Activated T-helper 1 cell treated with anti-CD3 and anti-CD28 coated beads, Interleukin-12 subunit alpha, Interleukin-12 subunit beta, Interleukin-2, Interleukin-4 antibody, amounts not matched to agents 30 ng/mL and 10 ng/mL and 1 ng/mL, durations not matched to agents 14 hours and 24 hours and 36 hours (primary cell): ENCODE measurements at regions of chr16 and their contacts with region 1.

Region 1: DNA sequence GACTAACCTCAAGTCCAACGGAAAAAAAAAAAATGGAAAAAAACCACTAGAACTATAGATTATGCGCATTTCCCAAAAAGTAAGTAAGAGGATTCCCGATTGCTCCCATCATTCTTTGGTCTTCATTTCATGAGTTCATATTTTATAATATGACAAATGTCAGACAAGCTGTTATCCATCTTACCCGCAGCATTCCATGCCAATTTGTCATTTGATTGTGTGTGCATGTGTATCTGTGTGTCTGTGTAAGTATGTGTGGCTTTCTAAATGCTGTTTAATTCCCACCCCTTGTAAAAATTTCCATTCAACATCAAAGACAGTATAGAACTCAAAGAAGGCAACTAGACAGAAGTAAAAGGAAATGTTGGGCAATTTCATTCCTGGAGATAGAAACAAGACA is 434.1 kb downstream of the CDH11 start:
- DNase-seq: no peak
- H3K4me3 Mint-ChIP-seq: no peak overlapping the region
- H3K27ac Mint-ChIP-seq: no peak overlapping the region
- H3K4me1 Mint-ChIP-seq: no peaks in the 10 kb centered on the region
- H3K27me3 Mint-ChIP-seq: no peaks in the 10 kb centered on the region

Region 2: DNA sequence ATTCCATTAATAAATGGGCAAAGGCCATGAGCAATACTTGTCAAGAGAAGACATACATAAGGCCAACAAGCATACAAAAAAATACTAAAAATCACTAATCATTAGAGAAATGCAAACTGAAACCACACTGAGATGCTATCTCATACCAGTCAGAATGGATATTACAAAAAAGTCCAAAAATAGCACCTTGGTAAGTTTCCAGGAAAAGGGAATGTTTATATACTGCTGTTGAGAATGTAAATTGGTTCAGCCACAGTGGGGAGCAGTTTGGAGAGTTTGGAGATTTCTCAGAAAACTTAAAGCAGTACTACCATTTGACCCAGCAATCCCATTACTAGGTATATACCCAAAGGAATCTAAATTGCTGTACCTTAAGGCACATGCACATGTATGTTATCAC is 33.6 kb before region 1 on chr16:
- intact Hi-C with region 1: no loop called
- DNase-seq: no peak
- H3K4me3 Mint-ChIP-seq: no peak overlapping the region
- H3K27ac Mint-ChIP-seq: no peak overlapping the region
- H3K4me1 Mint-ChIP-seq: no peaks in the 10 kb centered on the region
- H3K27me3 Mint-ChIP-seq: no peaks in the 10 kb centered on the region

Region 3: DNA sequence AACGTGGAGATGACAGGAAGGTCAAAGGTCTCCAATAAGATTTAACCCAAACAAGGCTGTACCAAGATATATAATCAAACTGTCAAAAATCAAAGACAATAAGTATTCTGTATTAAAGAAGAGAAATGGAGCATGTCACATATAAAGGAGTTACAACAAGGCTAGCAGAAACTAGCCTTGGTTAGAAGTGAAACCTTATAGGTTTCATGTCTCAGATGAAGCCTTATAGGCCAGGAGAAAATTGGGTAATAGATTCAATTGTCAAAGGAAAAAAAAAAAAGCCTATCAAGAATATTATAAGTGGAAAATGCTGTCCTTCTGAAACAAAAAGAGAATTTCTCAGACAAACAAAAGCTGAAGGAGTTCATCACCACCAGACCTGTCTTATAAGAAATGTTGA is 14.6 kb after region 1 on chr16:
- intact Hi-C with region 1: loop called (anchors 2 kb)
- DNase-seq: no peak
- H3K4me3 Mint-ChIP-seq: no peak overlapping the region
- H3K27ac Mint-ChIP-seq: no peak overlapping the region
- H3K4me1 Mint-ChIP-seq: no peaks in the 10 kb centered on the region
- H3K27me3 Mint-ChIP-seq: no peaks in the 10 kb centered on the region